PC-9 (cell line): ENCODE measurements at regions of chr12 and their contacts with region 1.

Region 1: GRCh38 chr12:116697305-116697704 is 40.6 kb downstream of the SPRING1 start:
- DNase-seq: peak in 1 of 2 experiments; percentile 23
- H3K4me3 ChIP-seq: no peak overlapping the region
- H3K27ac ChIP-seq: no peak overlapping the region
- H3K4me1 ChIP-seq: peaks cover 30% of the 10 kb centered on the region
- H3K27me3 ChIP-seq: no peaks in the 10 kb centered on the region
- CTCF ChIP-seq: no peak; the same call in 1 of the 2 replicates

Region 2: DNA sequence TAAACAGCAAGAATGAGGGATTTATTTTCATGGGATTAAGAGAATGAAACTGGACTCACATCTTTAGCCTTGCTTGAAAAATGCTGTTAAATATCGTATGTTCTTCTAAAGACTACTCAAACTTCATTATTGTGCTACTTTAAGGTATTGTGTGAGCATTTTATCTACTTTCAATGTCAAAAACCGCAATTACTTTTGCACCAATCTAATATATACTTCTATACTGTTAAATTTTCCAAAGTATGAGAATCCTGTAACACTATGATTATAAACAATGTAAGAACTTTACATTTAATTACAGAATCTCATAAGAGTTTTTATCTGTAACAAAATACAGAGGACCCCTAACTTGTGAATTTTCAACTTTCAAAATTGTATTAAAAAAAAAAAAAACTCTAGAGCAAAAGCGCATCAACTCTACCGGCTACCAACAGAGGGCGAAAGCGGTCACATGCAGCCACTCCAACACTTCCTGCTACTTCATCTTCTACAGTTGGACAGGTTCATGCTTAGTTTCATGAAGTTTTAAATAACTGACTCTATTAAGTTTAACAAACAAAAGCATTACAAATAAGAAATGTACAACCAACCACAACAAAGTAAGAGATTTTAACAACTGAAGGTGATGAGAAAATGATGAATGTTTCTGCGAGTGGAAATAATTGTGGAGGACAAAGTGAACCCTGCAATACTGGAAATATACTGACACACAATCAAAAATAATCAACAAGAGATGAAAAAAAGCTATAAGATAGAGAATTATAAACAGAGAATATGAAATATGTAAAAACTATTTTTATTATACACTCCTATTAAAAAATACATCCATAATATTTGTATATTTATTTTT is 630.7 kb before region 1 on chr12:
- CTCF ChIA-PET with region 1: no interaction called
- POLR2A ChIA-PET with region 1: no interaction called
- intact Hi-C with region 1: loop called (anchors 5 kb)
- DNase-seq: peak in 1 of 2 experiments; percentile 37
- H3K4me3 ChIP-seq: no peak overlapping the region
- H3K27ac ChIP-seq: no peak overlapping the region
- H3K4me1 ChIP-seq: no peaks in the 10 kb centered on the region
- H3K27me3 ChIP-seq: no peaks in the 10 kb centered on the region
- CTCF ChIP-seq: peak; percentile 82

Region 3: DNA sequence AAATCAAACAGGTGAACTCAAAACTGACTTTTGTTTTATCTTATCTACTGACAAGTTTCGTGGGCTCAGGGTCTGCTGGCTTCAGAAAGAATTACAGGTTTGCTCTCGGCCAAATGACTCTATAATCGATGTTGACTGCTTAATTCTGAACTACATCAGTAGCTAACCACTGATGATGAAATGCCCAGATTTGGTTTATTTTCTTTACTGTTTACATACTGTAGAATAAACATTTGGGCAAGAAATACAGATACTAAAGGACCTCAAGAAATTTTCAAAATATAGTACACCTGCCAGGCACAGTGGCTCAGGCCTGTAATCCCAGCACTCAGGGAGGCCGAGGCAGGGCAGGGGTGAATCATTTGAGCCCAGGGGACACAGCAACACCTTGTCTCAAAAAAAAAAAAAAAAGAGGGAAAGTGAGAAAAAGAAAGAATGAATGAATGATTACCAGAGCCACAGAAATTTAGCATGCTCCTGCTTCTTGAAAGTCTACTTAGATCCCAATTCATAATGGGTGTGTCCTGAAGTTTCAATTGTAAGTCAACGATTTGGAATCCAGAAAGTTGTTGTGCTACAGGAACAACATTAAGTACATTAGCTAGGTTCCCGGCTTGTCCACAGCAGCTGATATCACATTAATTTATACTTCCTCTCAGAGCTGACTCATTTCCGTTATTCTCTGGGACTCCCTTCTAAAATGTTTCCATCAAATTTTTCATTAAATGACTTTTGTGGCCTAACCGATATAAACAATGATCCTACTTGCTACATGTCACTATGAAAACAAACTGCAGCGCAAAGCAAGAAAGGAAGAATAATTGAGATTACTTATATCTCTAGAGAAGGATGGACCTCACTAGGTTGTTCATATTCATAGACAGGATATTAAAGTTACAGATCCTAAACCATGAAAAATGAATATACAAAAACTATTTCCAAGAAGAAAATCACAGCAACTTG is 554.1 kb before region 1 on chr12:
- CTCF ChIA-PET with region 1: no interaction called
- POLR2A ChIA-PET with region 1: no interaction called
- intact Hi-C with region 1: loop called (anchors 5 kb)
- DNase-seq: peak in 1 of 2 experiments; percentile 83
- H3K4me3 ChIP-seq: no peak overlapping the region
- H3K27ac ChIP-seq: peak overlapping the region; percentile 81
- H3K4me1 ChIP-seq: peaks cover 23% of the 10 kb centered on the region
- H3K27me3 ChIP-seq: no peaks in the 10 kb centered on the region
- CTCF ChIP-seq: no peak

Region 4: DNA sequence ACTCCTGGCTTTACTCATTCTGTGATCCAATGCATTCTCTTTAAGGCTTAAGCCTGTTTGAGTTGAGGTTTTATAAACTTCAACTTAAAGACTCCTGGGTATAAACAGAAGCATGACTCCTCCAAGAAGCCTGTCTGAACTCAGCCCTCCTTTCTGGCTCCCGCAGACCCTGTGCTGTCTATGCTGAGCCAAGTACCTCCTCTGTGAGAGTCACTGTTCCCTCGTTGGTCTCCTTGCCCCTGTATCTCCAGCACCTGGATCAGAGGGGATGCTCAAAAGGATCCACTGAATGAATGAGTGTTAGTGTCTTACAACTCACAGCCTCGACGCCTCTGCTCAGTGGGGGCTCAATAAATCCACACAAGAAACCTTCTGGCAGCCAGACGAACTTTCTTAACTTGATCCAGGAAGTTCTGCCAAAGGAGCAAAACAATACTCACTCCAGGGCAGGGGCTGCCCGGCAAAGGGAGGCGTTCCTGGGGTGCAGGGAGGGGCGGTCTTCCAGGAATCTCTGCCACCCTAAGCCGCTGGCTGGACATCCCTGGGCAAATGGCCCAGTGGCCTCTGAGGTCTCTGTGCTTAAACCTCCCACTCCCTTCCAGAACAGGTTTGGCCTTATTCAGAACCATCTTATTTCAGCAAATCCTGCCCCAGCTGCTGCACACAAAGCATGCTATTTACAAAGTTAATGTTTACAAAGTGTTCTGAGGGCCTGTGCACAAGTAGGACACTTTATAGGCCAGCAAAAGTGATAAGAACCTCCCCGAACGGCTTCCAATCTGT is 105.3 kb before region 1 on chr12:
- CTCF ChIA-PET with region 1: no interaction called
- POLR2A ChIA-PET with region 1: no interaction called
- intact Hi-C with region 1: loop called (anchors 1 kb)
- DNase-seq: peak in 1 of 2 experiments; percentile 70
- H3K4me3 ChIP-seq: no peak overlapping the region
- H3K27ac ChIP-seq: no peak overlapping the region
- H3K4me1 ChIP-seq: peaks cover 12% of the 10 kb centered on the region; the same call in 1 of the 2 replicates
- H3K27me3 ChIP-seq: 0 out of 2 replicates have a peak, but pooled peaks cover 3% of the 10 kb centered on the region
- CTCF ChIP-seq: no peak

Region 5: GRCh38 chr12:116659771-116660481 is 37.4 kb before region 1 on chr12:
- CTCF ChIA-PET with region 1: no interaction called
- POLR2A ChIA-PET with region 1: no interaction called
- intact Hi-C with region 1: loop called (anchors 2 kb)
- DNase-seq: peak; percentile 47 to 86
- H3K4me3 ChIP-seq: peak overlapping the region; percentile 24; the same call in 1 of the 2 replicates
- H3K27ac ChIP-seq: no peak overlapping the region
- H3K4me1 ChIP-seq: peaks cover 22% of the 10 kb centered on the region
- H3K27me3 ChIP-seq: peaks cover 7% of the 10 kb centered on the region; the same call in 1 of the 2 replicates
- CTCF ChIP-seq: no peak

Region 6: GRCh38 chr12:116673681-116674111 is 23.6 kb before region 1 on chr12:
- CTCF ChIA-PET with region 1: interaction called, 10 read pairs
- POLR2A ChIA-PET with region 1: no interaction called
- intact Hi-C with region 1: no loop called
- DNase-seq: no peak
- H3K4me3 ChIP-seq: no peak overlapping the region
- H3K27ac ChIP-seq: no peak overlapping the region
- H3K4me1 ChIP-seq: no peaks in the 10 kb centered on the region
- H3K27me3 ChIP-seq: no peaks in the 10 kb centered on the region
- CTCF ChIP-seq: no peak; the same call in 1 of the 2 replicates

Region 7: DNA sequence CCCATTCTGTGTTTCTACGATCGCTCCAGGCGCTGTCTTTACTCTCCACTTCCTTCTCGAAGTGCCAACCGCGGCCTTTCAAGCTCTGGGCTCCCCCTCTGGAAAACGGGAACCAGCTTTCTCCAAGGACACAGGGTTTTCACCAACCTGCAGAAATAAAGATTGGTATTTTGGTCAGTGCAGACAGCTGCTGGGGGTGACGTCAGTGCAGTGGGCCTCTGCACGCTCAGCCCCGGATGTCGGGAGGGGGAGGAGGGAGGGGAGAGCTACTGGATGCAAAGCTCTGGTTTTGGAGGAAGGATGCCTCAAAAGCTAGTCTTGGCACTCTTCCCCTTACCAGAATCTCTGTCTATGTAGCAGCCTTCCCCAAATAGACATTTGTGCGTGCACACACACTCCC is 164.0 kb after region 1 on chr12:
- CTCF ChIA-PET with region 1: no interaction called
- POLR2A ChIA-PET with region 1: no interaction called
- intact Hi-C with region 1: no loop called
- DNase-seq: no peak
- H3K4me3 ChIP-seq: no peak overlapping the region
- H3K27ac ChIP-seq: no peak overlapping the region
- H3K4me1 ChIP-seq: peaks cover 27% of the 10 kb centered on the region
- H3K27me3 ChIP-seq: no peaks in the 10 kb centered on the region
- CTCF ChIP-seq: no peak